Astrocyte of the cerebellum (primary cell): ENCODE measurements at regions of chr10 and their contacts with region 1.

Region 1: DNA sequence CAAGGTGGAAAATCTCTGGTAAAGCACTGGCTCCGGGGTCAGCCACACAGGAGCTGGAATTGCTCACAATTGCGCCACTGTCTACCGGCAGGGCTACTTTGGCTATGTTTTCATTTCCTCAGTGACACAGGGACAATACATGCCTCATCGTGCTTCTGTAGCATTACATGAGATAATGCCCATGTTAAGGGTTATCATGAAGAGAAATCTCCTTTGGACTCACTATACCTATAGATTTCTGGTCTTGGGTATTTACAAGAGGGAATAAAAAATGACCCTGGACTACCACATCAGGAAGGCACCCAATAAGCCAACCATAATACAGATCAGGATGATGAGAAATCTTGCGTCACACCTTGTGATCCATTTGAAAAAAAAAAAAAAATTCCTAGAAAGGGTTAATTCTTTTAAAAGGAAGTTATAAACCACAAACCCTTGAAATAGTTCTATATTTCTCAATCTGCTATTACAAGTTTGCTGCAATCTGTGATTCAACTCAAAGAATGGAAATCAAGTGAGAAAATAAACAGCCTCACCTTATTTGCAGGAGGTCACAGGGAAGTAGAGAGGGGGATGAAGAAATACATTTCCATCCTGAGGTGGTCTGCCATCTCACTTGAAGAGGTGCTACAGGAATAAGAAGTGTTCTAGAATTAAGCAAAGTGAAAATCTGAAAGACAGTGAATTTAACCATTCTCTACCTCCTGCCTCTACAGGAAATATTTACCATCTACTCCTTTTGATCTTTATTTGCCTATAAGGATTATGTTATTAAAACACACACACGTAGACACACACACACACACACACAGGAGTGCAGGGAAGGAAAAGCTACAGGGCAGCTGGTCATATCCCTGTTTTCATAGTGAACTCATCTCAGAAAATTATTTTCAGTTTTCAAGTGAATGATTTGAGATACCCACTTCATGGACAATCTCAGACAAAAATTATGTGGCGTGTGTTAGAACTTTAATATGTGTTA is 231.3 kb upstream of the CELF2 start:
- DNase-seq: no peak
- H3K4me3 ChIP-seq: no peak overlapping the region
- CTCF ChIP-seq: no peak

Region 2: DNA sequence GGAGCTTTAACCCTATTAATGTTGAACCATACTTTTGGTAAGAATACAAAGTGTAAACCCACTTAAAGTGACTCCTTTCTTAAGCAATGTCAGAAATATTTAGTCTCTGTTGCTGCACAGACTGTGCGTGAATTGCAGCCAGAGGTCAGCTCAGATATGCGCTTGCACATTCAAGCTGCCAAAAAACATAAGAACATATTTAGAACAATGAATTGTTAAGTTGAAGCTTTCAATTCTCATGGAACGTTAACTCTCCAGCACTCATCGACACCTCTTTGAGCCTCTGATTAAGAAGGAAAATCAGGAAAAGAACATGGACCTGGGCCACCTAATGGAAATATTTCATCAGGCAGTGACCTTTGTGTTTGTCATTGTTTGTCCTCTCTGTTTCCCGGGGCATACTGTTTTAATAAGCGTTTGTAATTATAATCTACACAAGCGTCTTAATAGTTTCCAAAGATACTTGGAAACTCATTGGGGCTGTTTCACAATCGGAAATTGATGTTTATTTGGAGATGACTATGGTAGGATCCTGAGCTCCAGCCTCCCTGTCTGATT is 38.3 kb after region 1 on chr10:
- in situ Hi-C with region 1: loop called (anchors 5 kb)
- DNase-seq: peak; percentile 78
- H3K4me3 ChIP-seq: no peak overlapping the region
- CTCF ChIP-seq: no peak